Natural killer cell (primary cell): ENCODE measurements at regions of chr17 and their contacts with region 1.

Region 1: DNA sequence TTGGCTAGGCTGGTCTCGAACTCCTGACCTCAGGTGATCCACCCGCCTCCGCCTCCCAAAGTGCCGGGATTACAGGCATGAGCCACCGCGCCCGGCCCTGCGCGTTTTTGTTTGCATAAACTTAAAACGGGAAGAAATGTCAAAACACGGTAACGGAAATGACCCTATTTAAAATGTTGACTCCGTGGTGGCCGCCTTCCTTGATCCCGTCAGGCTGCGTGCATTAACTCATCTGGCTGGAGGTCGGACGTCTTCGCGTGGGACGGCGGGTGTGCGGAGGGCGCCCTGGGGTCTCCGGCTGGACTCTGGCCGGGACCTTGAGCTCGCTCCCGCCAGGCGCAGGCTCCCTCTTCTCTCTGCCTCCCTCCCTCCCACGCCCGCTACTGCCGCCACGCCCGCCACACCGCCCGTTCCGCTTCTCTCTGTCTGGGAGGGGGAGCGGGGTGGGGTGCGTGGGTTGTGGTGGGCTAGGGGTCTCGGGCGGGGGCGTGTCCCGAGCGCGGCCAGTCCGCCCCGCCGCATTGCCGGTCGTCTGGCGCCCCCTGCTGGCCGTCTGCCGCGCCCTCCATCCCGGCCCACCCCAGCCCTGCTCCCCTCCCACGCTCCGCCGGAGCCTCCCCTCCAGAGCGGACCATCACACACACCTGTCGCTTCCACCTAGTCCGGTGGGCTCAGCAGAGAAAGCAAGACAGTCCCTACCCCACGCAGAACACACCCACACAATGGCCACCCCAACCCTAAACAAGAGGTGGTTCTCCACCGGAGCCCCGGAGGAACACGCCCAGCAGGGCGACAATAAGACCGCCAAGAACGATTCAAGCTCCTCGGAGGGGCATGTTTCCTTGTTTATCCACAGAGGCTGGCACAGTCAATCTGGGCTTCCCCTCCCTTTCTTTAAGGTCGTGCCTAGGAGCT is 1.2 kb upstream of the CCDC42 start:
- DNase-seq: peak; percentile 77 to 86
- ATAC-seq: peak; percentile 76 to 81 (median 81)
- H3K4me3 ChIP-seq: peak overlapping the region; percentile 53
- H3K4me3 Mint-ChIP-seq: peak overlapping the region; percentile 92
- H3K27ac ChIP-seq: peak overlapping the region; percentile 68
- H3K27ac Mint-ChIP-seq: peak overlapping the region; percentile 82 to 91
- H3K4me1 ChIP-seq: peaks cover 21% of the 10 kb centered on the region
- H3K4me1 Mint-ChIP-seq: peaks cover 7 to 20% of the 10 kb centered on the region in 2 donors
- H3K27me3 ChIP-seq: no peaks in the 10 kb centered on the region
- H3K27me3 Mint-ChIP-seq: no peaks in the 10 kb centered on the region
- CTCF ChIP-seq: peak; percentile 97

Region 2: DNA sequence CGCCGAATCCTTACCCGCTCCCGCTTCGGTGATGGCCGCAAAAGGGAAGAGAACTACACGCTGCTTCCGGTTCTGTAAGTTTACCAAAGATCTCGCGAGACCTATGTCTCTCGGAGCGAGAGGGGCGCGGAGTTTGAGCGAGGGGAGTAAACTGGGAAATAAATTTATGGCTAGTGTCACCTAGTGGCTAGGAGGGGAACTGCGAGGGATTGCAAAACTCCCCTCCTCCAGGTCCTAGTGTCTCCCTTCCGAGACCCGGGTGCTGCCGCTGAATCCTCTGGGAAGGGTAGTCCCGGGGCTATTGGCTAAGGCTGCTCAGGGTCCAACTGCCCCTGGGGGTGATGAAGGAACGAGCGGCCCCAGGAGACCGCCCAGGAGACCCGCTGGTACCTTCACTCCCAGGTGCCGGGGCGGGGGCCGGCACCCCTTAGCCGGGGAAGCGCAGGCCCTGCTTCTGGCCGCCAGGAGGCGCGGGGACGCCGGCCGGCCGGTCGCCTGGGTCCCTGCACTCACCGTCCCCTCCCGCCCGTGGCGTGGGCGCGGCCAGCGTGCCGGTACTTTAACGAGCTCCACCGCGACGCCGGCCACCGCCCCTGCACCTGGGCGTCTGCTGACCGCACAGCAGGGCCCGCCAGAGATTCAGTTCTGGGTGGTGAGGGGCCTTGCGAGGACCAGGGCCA is 362.6 kb before region 1 on chr17 and contains the start of gene RPL26:
- intact Hi-C with region 1: loop called (anchors 10 kb)
- DNase-seq: peak; percentile 92 to 98
- ATAC-seq: peak; percentile 85 to 97 (median 89)
- H3K4me3 ChIP-seq: peak within 1 kb of the TSS; percentile 56
- H3K4me3 Mint-ChIP-seq: peak within 1 kb of the TSS; percentile 99
- H3K27ac ChIP-seq: peak within 1 kb of the TSS; percentile 68
- H3K27ac Mint-ChIP-seq: peak within 1 kb of the TSS; percentile 89 to 98
- H3K4me1 ChIP-seq: peaks cover 41% of the 10 kb centered on the region
- H3K4me1 Mint-ChIP-seq: peaks cover 56 to 64% of the 10 kb centered on the region in 2 donors
- H3K27me3 ChIP-seq: no peaks in the 10 kb centered on the region
- H3K27me3 Mint-ChIP-seq: peaks cover 0 to 4% of the 10 kb centered on the region in 2 donors
- CTCF ChIP-seq: peak; percentile 99
- total RNA-seq, gene RPL26: 1,481 to 1,796 (median 1,628) TPM

Region 3: DNA sequence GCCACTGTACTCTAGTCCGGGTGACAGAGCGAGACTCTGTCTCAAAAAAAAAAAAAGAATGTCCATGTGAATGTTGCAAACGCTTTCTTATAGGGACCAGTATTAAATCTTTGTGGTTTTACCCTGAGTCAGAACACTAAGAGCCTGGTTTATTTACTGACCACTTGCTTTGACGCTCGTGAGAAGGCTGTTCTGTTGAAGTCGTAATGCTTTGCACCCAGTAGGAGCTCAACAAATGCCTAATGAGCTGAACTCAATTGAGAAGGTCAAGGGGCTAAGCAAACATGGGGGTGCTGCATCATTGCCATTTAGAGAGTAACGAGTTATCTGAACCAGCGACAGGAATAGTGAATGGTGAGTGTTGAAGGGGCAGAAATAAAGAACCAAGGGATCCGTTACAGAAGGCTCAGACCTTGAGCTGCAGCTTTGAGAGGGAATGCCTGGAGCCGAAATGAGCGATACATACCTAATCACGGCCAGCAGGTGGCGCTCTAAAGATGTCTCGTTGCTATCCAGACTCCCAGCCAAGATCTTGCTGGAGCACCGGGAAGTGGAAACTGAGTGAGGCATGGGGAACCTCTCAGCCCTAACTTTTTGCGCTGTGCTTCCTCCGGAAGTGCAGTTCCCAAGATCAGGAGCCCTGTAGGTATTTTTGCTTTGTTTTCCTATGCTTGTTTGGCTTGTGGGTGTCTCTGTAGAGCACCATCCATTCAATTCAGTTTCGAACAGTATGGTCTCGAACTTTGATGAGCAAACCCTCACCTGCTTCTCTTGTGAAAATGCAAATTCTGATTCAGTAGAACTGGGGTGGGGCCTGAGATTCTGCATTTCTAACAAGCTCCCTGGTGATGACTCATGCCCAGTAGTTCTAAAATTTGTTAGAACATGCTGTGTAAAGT is 335.6 kb before region 1 on chr17:
- intact Hi-C with region 1: loop called (anchors 2 kb)
- DNase-seq: peak; percentile 72 to 91
- ATAC-seq: peak; percentile 71 to 91 (median 88)
- H3K4me3 ChIP-seq: no peak overlapping the region
- H3K4me3 Mint-ChIP-seq: no peak overlapping the region
- H3K27ac ChIP-seq: no peak overlapping the region
- H3K27ac Mint-ChIP-seq: no peak overlapping the region
- H3K4me1 ChIP-seq: peaks cover 6% of the 10 kb centered on the region
- H3K4me1 Mint-ChIP-seq: peaks cover 6 to 9% of the 10 kb centered on the region in 2 donors
- H3K27me3 ChIP-seq: peaks cover 6% of the 10 kb centered on the region
- H3K27me3 Mint-ChIP-seq: peaks cover 11 to 12% of the 10 kb centered on the region in 2 donors
- CTCF ChIP-seq: peak; percentile 92

Region 4: GRCh38 chr17:8581002-8581658 is 164.7 kb before region 1 on chr17:
- intact Hi-C with region 1: loop called (anchors 10 kb)
- DNase-seq: no peak
- ATAC-seq: no peak
- H3K4me3 ChIP-seq: no peak overlapping the region
- H3K4me3 Mint-ChIP-seq: no peak overlapping the region
- H3K27ac ChIP-seq: no peak overlapping the region
- H3K27ac Mint-ChIP-seq: no peak overlapping the region
- H3K4me1 ChIP-seq: no peaks in the 10 kb centered on the region
- H3K4me1 Mint-ChIP-seq: no peaks in the 10 kb centered on the region
- H3K27me3 ChIP-seq: no peaks in the 10 kb centered on the region
- H3K27me3 Mint-ChIP-seq: peaks cover 7 to 9% of the 10 kb centered on the region in 2 donors
- CTCF ChIP-seq: no peak

Region 5: DNA sequence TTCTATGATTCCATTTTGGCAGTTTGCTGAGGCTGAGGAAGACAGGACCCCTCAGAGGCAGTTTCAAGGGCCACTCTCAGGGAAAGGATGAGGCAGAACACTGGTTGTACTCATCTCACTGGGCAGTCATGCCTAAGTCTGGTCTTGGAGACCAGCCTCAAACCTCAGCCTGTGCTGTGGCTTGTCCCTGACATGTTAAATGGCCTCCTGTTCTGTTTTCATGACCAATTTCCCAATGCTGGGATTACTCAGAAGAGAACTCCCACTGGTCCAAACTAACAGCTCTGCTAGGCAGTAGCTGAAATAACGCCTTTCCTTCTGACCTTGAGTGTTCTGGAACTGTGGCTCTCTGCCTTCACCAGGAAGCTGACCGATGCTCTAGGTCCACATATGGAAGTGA is 20.9 kb after region 1 on chr17:
- intact Hi-C with region 1: no loop called
- DNase-seq: no peak
- ATAC-seq: no peak
- H3K4me3 ChIP-seq: no peak overlapping the region
- H3K4me3 Mint-ChIP-seq: no peak overlapping the region
- H3K27ac ChIP-seq: no peak overlapping the region
- H3K27ac Mint-ChIP-seq: no peak overlapping the region
- H3K4me1 ChIP-seq: no peaks in the 10 kb centered on the region
- H3K4me1 Mint-ChIP-seq: no peaks in the 10 kb centered on the region
- H3K27me3 ChIP-seq: no peaks in the 10 kb centered on the region
- H3K27me3 Mint-ChIP-seq: peaks cover 17 to 37% of the 10 kb centered on the region in 2 donors
- CTCF ChIP-seq: no peak